ENCODE measurements at regions of chr3 and their contacts with region 1.

Region 1: GRCh38 chr3:197599089-197599765 is 43.5 kb upstream of the BDH1 start:
- DNase-seq: peak; percentile 53 to 83 (median 78)
- H3K4me3 ChIP-seq: peak overlapping the region in 56 of 59 donors; percentile 1 to 62 (median 43)
- H3K27ac ChIP-seq: peak overlapping the region in 54 of 59 donors; percentile 30 to 93 (median 74)
- H3K27me3 ChIP-seq: no peaks in the 10 kb centered on the region
- CTCF ChIP-seq: peak; percentile 53 to 97 (median 92)

Region 2: DNA sequence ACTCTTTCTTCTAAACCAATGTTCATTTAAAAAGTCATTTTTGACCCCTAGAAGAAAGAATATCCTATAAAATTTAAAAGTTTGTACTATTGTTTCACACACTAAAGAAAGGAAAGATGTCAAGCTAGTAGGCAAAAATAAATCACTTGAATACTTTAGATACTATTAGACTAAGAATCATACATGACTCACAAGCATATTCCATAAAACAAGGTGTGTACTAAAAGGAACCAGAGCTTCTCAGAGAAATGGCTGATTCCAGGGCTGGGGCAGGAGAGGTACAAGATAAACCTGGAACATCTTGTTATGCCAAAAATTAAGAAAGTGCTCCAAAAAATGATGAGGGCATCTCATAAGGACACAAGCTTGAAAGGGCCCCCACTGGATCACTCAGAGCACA is 309.5 kb before region 1 on chr3:
- intact Hi-C with region 1: no loop called
- DNase-seq: no peak
- H3K4me3 ChIP-seq: peak overlapping the region in 5 of 59 donors; percentile 0 to 40 (median 2)
- H3K27ac ChIP-seq: peak overlapping the region in 51 of 59 donors; percentile 12 to 98 (median 64)
- H3K27me3 ChIP-seq: no peaks in the 10 kb centered on the region
- CTCF ChIP-seq: peak in 1 of 56 donors; percentile 7

Region 3: GRCh38 chr3:197554562-197555280 is 44.5 kb before region 1 on chr3:
- intact Hi-C with region 1: loop called in 1 of 2 experiments (anchors 5 kb)
- DNase-seq: peak; percentile 96 to 99 (median 98)
- H3K4me3 ChIP-seq: peak overlapping the region; percentile 59 to 99 (median 92)
- H3K27ac ChIP-seq: peak overlapping the region; percentile 62 to 99 (median 97)
- H3K27me3 ChIP-seq: no peaks in the 10 kb centered on the region
- CTCF ChIP-seq: peak; percentile 19 to 82 (median 66)

Region 4: DNA sequence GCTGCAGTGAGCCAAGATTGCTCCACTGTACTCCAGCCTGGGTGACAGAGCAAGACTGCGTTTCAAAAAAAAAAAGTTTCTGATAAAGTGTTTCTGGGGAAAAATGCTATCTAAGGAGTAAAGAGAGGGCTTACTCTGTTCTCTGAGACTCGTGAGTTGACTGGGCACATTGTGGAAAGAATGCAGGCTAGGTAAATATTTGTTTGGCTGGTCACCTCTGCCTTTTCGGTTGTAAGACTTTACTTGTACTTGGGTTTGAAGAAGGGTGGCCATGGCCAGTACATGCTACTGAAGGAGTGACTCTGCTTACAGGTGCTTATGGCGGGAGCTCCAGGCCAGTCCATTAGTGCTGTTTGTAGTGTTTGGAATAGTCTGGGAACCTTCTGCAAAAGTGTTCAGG is 68.8 kb after region 1 on chr3:
- intact Hi-C with region 1: loop called in 1 of 2 experiments (anchors 10 kb)
- DNase-seq: no peak
- H3K4me3 ChIP-seq: no peak overlapping the region
- H3K27ac ChIP-seq: peak overlapping the region in 1 of 59 donors; percentile 26
- H3K27me3 ChIP-seq: no peaks in the 10 kb centered on the region
- CTCF ChIP-seq: no peak

Measured in dorsolateral prefrontal cortex (tissue), 120 donors.